Naive thymus-derived CD4-positive, alpha-beta T cell (primary cell): ENCODE measurements at regions of chr5 and their contacts with region 1.

Region 1: DNA sequence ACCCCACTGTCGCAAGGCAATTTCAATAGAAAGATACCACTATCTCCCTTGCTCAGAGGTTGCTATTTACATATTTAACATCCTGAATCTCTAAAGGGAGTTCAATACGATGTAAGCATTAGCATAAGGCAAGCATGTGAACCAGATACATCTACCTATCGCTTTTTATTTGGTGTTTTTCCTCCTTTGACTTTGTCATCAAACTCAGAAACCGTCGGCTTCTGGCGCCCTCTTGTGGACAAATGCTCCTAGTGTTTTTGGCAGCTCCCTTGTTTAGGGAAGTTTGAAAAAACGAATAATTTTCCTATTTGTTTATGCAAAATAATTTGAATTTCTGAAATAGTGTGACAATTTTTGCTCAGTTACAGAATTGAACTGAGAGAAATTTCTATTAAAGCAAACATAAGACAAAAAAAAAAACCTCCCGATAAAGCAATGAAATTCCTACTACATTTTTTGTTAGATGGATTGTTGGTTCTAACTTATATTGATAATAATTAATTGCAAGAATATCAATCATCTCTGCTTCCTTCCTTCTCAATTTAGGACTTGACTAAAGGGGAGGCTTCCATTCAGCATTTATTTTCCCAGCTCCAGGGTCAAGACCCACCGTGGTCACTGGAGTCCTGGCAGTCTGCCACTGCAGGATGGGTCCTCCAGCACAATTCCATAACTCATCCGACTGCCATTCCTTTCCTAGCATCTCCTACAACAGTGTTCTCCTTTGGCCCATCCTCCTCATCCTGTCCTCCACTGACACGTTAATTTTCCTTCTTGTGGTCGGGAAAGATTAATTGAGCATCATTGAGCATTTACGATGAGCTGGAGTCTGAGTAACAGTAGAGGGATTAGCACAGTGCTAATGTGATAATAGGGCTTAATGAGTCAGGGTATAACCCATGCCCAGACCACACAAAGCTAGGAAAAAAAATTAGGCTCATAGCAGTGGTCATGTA is 131.8 kb upstream of the CHD1 start:
- DNase-seq: peak; percentile 66 to 86 (median 80)
- ATAC-seq: peak; percentile 87
- H3K4me3 ChIP-seq: no peak overlapping the region
- H3K4me3 Mint-ChIP-seq: peak overlapping the region in 5 of 10 donors; percentile 7 to 53 (median 29)
- H3K27ac ChIP-seq: no peak overlapping the region
- H3K27ac Mint-ChIP-seq: no peak overlapping the region
- H3K4me1 ChIP-seq: peaks cover 0 to 4% of the 10 kb centered on the region in 2 donors
- H3K4me1 Mint-ChIP-seq: peaks cover 0 to 18% (median 9%) of the 10 kb centered on the region in 7 donors
- H3K27me3 ChIP-seq: no peaks in the 10 kb centered on the region
- H3K27me3 Mint-ChIP-seq: peaks cover 0 to 20% (median 4%) of the 10 kb centered on the region in 5 donors

Region 2: GRCh38 chr5:98768160-98769005 is 292.2 kb before region 1 on chr5:
- CTCF ChIA-PET with region 1: no interaction called
- POLR2A ChIA-PET with region 1: interaction called, 3 read pairs
- intact Hi-C with region 1: loop called (anchors 1 to 2 kb)
- DNase-seq: peak in 7 of 9 donors; percentile 23 to 43 (median 27)
- ATAC-seq: peak; percentile 38
- H3K4me3 ChIP-seq: peak overlapping the region; percentile 65
- H3K4me3 Mint-ChIP-seq: peak overlapping the region; percentile 78 to 100 (median 96)
- H3K27ac ChIP-seq: no peak overlapping the region
- H3K27ac Mint-ChIP-seq: peak overlapping the region in 3 of 9 donors; percentile 50 to 60 (median 58)
- H3K4me1 ChIP-seq: peaks cover 19 to 25% of the 10 kb centered on the region in 2 donors
- H3K4me1 Mint-ChIP-seq: peaks cover 22 to 45% (median 38%) of the 10 kb centered on the region in 7 donors
- H3K27me3 ChIP-seq: peaks cover 0 to 6% of the 10 kb centered on the region in 2 donors
- H3K27me3 Mint-ChIP-seq: peaks cover 21 to 81% (median 39%) of the 10 kb centered on the region in 5 donors

Region 3: DNA sequence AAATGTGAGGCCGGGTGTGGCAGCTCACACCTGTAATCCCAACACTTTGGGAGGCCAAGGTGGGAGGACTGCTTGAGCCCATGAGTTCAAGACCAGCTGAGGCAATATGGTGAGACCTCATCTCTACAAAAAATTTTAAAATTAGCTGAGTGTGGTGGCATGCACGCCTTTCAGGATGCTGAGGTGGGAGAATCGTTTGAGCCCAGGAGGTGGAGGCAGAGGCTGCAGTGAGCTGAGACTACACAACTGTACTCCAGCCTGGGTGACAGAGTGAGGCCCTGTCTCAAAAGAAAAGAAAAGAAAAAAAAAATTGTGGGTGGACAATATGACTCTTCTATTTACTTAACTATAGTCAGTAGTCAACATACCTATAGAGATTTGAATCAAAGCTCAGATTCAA is 136.6 kb before region 1 on chr5:
- CTCF ChIA-PET with region 1: interaction called, 11 read pairs
- POLR2A ChIA-PET with region 1: interaction called, 47 read pairs
- intact Hi-C with region 1: loop called (anchors 1 kb)
- DNase-seq: no peak
- ATAC-seq: no peak
- H3K4me3 ChIP-seq: no peak overlapping the region
- H3K4me3 Mint-ChIP-seq: peak overlapping the region in 7 of 10 donors; percentile 16 to 67 (median 27)
- H3K27ac ChIP-seq: no peak overlapping the region
- H3K27ac Mint-ChIP-seq: peak overlapping the region in 3 of 9 donors; percentile 59 to 67 (median 64)
- H3K4me1 ChIP-seq: peaks cover 16 to 28% of the 10 kb centered on the region in 2 donors
- H3K4me1 Mint-ChIP-seq: peaks cover 38 to 89% (median 79%) of the 10 kb centered on the region in 7 donors
- H3K27me3 ChIP-seq: no peaks in the 10 kb centered on the region
- H3K27me3 Mint-ChIP-seq: peaks cover 0 to 2% (median 0%) of the 10 kb centered on the region in 5 donors

Region 4: GRCh38 chr5:99004960-99005359 is 55.6 kb before region 1 on chr5:
- CTCF ChIA-PET with region 1: interaction called, 4 read pairs
- POLR2A ChIA-PET with region 1: no interaction called
- intact Hi-C with region 1: loop called in 1 of 2 experiments (anchors 10 kb)
- DNase-seq: peak in 4 of 9 donors; percentile 14 to 45 (median 34)
- ATAC-seq: peak; percentile 91
- H3K4me3 ChIP-seq: no peak overlapping the region
- H3K4me3 Mint-ChIP-seq: no peak overlapping the region
- H3K27ac ChIP-seq: no peak overlapping the region
- H3K27ac Mint-ChIP-seq: peak overlapping the region in 2 of 9 donors; percentile 28 to 43
- H3K4me1 ChIP-seq: no peaks in the 10 kb centered on the region
- H3K4me1 Mint-ChIP-seq: peaks cover 3 to 22% (median 11%) of the 10 kb centered on the region in 7 donors
- H3K27me3 ChIP-seq: no peaks in the 10 kb centered on the region
- H3K27me3 Mint-ChIP-seq: peaks cover 0 to 5% (median 0%) of the 10 kb centered on the region in 5 donors

Region 5: GRCh38 chr5:99037668-99038067 is 22.9 kb before region 1 on chr5:
- CTCF ChIA-PET with region 1: interaction called, 15 read pairs
- POLR2A ChIA-PET with region 1: interaction called, 8 read pairs
- intact Hi-C with region 1: loop called (anchors 1 kb)
- DNase-seq: peak in 8 of 9 donors; percentile 17 to 84 (median 72)
- ATAC-seq: peak; percentile 77
- H3K4me3 ChIP-seq: peak overlapping the region; percentile 47
- H3K4me3 Mint-ChIP-seq: peak overlapping the region; percentile 7 to 75 (median 64)
- H3K27ac ChIP-seq: peak overlapping the region; percentile 32
- H3K27ac Mint-ChIP-seq: peak overlapping the region; percentile 44 to 96 (median 87)
- H3K4me1 ChIP-seq: peaks cover 30 to 33% of the 10 kb centered on the region in 2 donors
- H3K4me1 Mint-ChIP-seq: peaks cover 34 to 74% (median 53%) of the 10 kb centered on the region in 7 donors
- H3K27me3 ChIP-seq: no peaks in the 10 kb centered on the region
- H3K27me3 Mint-ChIP-seq: peaks cover 0 to 25% (median 0%) of the 10 kb centered on the region in 5 donors